ENCODE measurements at regions of chr3 and their contacts with region 1.

Region 1: GRCh38 chr3:160343132-160343531 is 55.9 kb downstream of the IFT80 start:
- DNase-seq: no peak
- H3K4me3 ChIP-seq: no peak overlapping the region
- H3K27ac ChIP-seq: no peak overlapping the region
- H3K4me1 ChIP-seq: no peaks in the 10 kb centered on the region
- H3K27me3 ChIP-seq: no peaks in the 10 kb centered on the region
- CTCF ChIP-seq: peak; percentile 10 to 50 (median 33)
- EP300 ChIP-seq: no peak
- POLR2A ChIP-seq: no peak

Region 2: GRCh38 chr3:160027541-160028195 is 315.5 kb before region 1 on chr3:
- intact Hi-C with region 1: loop called (anchors 2 kb)
- DNase-seq: no peak
- H3K4me3 ChIP-seq: no peak overlapping the region
- H3K27ac ChIP-seq: no peak overlapping the region
- H3K4me1 ChIP-seq: no peaks in the 10 kb centered on the region
- H3K27me3 ChIP-seq: no peaks in the 10 kb centered on the region
- CTCF ChIP-seq: no peak
- EP300 ChIP-seq: no peak
- POLR2A ChIP-seq: no peak

Region 3: DNA sequence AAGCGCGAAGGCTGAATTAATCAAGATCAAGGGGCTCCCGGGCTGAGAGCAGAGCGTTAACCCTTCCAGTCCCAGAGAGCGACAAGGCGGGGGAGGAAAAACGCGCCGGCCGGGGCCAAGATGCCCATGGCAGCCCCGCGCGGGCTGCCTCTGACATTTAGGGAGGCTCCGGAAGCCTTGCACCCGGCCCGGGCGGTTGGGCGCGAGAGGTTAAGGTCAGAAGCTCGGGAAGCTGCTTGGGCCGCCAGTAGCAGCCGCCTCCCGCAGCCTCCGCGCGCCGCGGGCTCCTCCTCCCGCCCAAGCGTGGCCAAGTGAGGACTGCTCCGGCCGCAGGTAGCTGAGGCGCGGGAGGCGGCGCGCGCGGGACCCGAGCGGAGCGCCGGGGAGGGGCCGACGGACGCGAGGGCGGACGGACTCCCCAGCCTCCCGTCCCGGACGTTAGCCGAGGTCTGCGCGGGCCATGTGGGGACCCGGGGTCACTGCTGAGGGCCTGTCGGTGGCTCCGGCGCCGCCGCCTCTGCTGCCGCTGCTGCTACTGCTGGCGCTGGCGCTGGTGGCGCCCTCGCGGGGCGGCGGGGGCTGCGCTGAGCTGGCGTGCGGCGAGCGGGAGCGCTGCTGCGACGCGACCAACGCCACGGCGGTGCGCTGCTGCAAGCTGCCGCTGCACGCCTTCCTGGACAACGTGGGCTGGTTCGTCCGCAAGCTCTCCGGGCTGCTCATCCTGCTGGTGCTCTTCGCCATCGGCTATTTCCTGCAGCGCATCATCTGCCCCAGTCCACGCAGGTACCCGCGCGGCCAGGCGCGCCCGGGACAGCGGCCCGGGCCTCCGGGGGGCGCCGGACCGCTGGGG is 117.7 kb before region 1 on chr3 and contains the start of gene C3orf80:
- intact Hi-C with region 1: loop called (anchors 5 kb)
- DNase-seq: peak; percentile 87
- H3K4me3 ChIP-seq: peak within 1 kb of the TSS; percentile 54 to 81 (median 79)
- H3K27ac ChIP-seq: peak within 1 kb of the TSS in 3 of 4 donors; percentile 82 to 85 (median 84)
- H3K4me1 ChIP-seq: peaks cover 0 to 52% (median 36%) of the 10 kb centered on the region in 4 donors
- H3K27me3 ChIP-seq: peaks cover 0 to 11% (median 0%) of the 10 kb centered on the region in 3 donors
- CTCF ChIP-seq: peak in 1 of 4 experiments; percentile 30
- EP300 ChIP-seq: no peak
- POLR2A ChIP-seq: peak in 1 of 2 donors; percentile 8
- total RNA-seq, gene C3orf80: 5.8 to 28.3 (median 23.4) TPM

Region 4: DNA sequence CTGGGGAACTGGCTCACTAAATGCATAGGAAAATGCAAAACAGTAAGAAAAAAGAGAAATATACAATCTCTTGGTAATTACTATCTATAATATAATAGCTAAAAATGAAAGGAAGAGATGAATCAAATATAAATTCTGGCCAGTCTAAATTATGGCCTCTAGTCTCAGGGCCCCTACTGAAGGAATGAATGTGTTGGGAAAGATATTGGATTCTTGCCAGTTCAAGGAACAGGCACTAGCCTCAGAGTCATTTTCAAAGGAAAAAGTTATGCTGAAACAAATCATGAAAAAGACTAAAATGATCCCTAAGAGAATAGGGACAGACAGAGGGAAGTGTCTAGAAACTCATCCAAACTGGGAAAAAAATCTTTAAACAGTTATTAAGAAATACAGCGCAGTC is 55.5 kb before region 1 on chr3:
- intact Hi-C with region 1: loop called (anchors 5 kb)
- DNase-seq: no peak
- H3K4me3 ChIP-seq: no peak overlapping the region
- H3K27ac ChIP-seq: no peak overlapping the region
- H3K4me1 ChIP-seq: peaks cover 0 to 6% (median 0%) of the 10 kb centered on the region in 4 donors
- H3K27me3 ChIP-seq: no peaks in the 10 kb centered on the region
- CTCF ChIP-seq: no peak
- EP300 ChIP-seq: no peak
- POLR2A ChIP-seq: no peak

Region 5: GRCh38 chr3:160302806-160303205 is 40.3 kb before region 1 on chr3:
- intact Hi-C with region 1: no loop called
- DNase-seq: no peak
- H3K4me3 ChIP-seq: no peak overlapping the region
- H3K27ac ChIP-seq: no peak overlapping the region
- H3K4me1 ChIP-seq: no peaks in the 10 kb centered on the region
- H3K27me3 ChIP-seq: no peaks in the 10 kb centered on the region
- CTCF ChIP-seq: no peak
- EP300 ChIP-seq: no peak
- POLR2A ChIP-seq: no peak

Region 6: DNA sequence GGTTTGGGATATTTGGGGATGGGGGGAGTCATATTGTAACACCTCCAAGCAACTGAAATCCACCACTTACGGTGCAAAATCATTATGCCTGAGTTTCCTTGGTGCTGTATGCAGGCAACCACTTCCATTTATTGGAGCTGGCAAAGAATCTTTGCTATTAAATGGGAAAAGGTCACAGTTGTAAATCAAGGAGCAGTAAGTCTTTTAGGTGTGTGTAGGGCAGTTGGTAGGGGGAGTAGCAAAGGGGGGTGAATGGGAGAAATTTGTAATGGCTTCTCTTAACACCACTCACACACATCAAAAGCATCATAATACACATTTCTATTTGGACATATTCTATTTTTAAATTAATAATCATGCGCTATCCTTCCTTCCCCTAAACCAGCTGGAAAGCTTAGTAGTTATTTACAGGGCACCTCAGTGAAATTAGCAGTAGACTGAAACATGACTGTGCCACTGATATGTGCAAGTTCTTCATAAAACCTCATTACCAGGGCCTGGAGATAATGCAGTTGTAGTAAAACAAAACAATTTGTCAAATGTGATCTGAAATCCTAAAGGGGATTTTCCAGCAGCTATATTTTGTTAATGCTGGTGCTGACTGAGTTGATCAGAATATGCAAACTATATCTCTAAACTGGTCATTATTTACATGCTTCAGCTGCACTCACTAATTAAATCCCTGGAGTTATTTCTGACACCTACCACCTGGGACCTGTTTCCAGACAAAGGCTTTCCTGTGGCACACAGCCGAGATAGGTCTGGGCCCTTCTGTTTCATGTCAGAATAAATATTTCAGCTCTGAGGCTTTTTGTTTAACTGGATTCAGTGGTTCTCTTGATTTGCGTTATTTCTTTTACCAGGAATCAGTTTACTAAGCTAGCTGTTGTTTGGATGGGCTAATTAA is 672.0 kb after region 1 on chr3:
- intact Hi-C with region 1: no loop called
- DNase-seq: no peak
- H3K4me3 ChIP-seq: no peak overlapping the region
- H3K27ac ChIP-seq: peak overlapping the region in 1 of 4 donors; percentile 18
- H3K4me1 ChIP-seq: peaks cover 0 to 25% (median 21%) of the 10 kb centered on the region in 4 donors
- H3K27me3 ChIP-seq: no peaks in the 10 kb centered on the region
- CTCF ChIP-seq: no peak
- EP300 ChIP-seq: no peak
- POLR2A ChIP-seq: no peak

Measured in sigmoid colon (tissue), 7 donors.